ENCODE measurements at regions of chr5 and their contacts with region 1.

Region 1: DNA sequence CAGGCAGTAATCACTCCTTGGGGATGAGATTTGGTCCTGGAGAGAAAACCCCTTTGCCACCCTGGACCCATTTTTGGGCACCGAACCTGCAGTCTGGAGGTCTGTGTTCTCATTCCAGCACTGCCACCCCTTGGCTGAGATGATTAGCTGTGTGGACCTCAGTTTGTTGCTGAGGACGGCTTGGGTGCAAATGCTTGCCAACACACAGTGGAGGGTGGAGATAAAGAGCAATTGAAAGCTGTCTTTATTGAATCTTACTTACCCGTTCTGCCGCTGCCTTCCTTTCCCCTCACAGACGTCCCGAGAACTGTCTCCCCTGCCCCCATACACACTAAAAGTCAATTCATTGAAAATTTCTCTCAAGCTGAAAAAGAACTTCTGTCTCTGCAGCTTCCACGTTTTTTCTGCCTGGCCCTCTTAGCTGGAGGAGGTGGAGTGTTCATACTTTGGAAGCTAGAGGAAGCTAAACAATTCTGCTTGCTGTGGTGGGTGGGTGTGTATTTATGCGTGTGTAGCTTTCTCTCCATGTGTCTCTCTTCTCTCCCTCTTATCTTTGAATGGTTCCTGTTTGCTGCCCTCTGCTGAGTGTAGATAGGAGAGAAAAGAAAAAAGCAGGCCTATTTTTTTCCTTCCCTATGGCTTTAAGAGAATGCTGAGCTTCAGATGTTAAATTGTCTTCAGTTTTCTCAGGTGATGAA is 6.6 kb downstream of the GALNT10 start:
- DNase-seq: no peak
- H3K4me3 ChIP-seq: no peak overlapping the region; the same call in 1 of the 2 replicates
- CTCF ChIP-seq: peak; percentile 25

Region 2: DNA sequence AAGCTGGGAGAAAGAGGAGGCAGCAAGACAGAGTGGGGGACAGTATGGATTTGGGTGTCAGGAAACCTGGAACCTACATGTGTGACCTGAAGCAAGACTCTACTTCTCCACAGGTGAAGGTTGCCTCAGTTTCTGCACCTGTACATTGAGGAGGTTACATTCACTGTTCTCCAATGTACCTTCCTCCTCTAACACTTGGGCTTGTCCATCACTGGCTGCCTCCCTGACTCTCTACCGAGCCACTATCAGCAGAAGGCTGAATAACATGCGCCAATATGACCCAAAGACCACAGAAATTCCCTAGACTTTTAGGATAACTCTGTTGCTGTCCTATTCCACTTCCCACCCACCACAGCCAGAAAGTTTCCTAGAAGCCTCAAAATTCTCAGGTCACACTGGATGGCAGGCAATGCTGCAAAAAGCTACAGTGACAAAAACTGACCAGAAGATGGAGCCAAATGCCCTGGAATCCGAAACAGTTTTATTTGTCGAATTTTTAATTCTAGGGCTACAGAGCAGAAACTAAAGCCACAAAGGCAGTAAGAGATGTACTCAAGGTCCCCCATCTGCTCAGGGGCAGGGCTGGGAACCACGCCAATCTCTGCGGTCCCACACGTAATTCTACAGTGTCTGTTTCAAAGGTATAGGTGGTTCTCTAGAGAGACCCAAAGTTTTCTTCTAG is 222.8 kb before region 1 on chr5:
- CTCF ChIA-PET with region 1: interaction called, 11 read pairs
- POLR2A ChIA-PET with region 1: no interaction called
- DNase-seq: no peak
- H3K4me3 ChIP-seq: no peak overlapping the region
- CTCF ChIP-seq: peak; percentile 63

Region 3: DNA sequence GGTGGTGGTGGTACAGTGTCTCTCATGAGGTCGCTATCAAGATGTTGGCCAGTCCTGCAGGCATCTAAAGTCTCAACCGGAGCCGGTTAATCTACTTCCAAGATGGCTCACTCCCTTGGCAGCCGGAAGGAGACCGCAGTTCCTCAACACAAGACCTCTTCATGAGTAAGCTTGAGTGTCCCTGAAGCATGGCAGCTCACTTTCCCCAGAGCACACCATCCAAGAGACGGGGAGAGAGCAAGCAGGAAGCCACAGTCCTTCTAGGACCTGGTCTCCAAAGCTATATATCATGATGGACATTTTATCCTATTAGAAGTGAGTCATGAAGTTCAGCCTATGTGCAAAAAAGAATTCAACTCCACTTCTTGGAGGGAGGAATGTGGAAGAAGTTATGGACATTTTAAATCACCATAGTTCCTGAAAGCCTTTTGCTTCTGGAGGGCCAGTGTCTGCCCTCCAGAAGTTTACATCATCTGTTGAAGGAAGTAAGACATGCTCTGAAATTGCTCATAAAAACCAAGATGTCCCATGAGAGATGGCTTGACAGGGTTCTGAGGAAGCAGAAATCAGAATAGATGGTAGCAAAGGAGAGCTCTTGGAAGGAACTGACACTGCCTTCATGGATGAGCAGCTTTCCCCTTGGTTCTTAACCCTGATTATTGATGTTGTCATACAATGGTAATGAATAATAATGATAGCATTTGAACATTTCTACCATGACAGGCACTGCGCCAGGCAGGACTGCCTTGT is 14.7 kb after region 1 on chr5:
- CTCF ChIA-PET with region 1: interaction called, 16 read pairs
- POLR2A ChIA-PET with region 1: interaction called, 3 read pairs
- DNase-seq: no peak
- H3K4me3 ChIP-seq: no peak overlapping the region
- CTCF ChIP-seq: no peak

Region 4: GRCh38 chr5:154287136-154287535 is 90.0 kb after region 1 on chr5:
- CTCF ChIA-PET with region 1: interaction called, 22 read pairs
- POLR2A ChIA-PET with region 1: interaction called, 3 read pairs
- DNase-seq: peak; percentile 63
- H3K4me3 ChIP-seq: peak overlapping the region; percentile 20; the same call in 1 of the 2 replicates
- CTCF ChIP-seq: no peak

Region 5: DNA sequence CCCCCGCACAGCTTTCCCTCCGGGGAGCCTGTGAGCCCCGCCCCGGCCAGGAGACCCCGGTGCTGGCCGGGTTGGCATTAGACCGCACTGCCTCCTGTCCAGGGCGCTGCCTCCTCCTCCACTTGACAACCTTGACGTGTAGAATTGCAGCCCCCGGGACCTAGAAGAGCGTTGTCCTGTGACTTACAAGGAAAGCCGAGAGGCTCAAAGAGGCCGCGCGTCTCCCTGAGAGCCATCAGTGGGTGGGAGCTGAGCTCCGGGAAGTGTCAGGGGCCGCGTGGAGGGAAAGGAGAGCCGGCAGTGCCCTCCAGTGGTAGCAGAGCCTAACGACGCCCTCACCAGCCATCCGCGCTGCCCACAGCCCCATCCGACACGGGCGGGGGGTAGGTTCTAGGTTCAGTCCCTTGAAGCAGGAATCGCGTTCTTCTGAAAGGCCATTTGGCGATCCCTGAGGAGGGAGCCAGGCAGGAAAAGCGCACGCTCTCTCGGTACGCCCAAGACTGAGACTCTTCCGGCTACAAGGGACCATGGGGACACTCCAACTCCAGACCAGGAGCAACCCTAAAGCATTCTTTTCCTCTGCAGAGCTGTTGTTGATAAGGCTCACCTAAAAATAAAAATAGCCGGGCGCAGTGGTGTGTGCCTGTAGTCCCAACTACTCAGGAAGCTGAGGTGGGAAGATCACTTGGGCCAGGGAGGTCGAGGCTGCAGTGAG is 208.1 kb after region 1 on chr5:
- CTCF ChIA-PET with region 1: interaction called, 114 read pairs
- POLR2A ChIA-PET with region 1: no interaction called
- DNase-seq: no peak
- H3K4me3 ChIP-seq: peak overlapping the region; percentile 32; the same call in 1 of the 2 replicates
- CTCF ChIP-seq: peak; percentile 98